ENCODE measurements at regions of chr1 and their contacts with region 1.

Region 1: GRCh38 chr1:26695356-26696118 is at the start of gene ARID1A:
- DNase-seq: peak; percentile 97
- total RNA-seq, gene ARID1A: 52.1 TPM

Region 2: DNA sequence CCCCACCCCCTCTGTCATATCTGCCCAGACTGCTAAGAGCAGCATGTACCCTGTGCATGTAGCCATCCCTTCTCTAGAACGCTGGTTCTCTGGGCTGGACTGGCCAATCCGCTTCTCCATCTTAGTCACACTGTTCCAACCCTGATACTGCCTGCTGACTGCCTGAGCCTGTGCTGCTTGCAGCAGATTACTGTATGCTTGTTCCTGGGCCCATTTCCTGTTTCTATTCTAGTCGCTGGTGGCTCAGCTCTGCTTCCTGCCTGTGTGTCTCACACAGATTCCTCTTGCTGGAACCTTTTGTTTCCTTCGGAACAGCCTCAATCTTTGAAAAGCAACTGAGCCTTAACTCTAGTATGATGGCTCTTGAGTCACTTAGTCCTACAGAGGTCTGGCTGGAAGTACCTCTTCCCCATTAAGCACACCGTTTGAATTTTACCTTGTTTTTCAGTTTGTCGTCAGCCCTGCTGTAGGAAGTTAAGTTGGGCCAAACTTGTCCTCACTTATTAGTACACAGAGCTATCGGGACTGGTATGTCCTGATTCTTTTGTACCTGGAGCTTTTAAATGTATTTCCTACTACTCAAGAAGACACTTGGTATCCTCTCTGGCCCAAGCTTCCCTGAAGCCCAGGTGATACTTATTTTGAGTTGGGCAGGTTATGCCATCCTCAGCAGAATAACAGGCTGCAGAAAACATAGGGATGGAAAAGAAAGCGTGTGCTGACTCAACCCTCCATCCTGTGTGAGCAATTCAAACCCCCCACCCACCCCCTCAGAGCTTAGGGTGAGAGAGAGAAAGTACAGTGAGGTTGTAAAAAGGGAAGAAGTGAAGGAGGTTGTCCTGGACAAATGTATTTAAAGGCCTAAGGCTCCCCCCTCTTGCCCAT is 48.8 kb after region 1 on chr1:
- intact Hi-C with region 1: loop called (anchors 5 kb)
- DNase-seq: peak; percentile 91